Activated B cell treated with CpG ODN at 0.5 μM for 24 hours (primary cell): ENCODE measurements at regions of chr18 and their contacts with region 1.

Region 1: DNA sequence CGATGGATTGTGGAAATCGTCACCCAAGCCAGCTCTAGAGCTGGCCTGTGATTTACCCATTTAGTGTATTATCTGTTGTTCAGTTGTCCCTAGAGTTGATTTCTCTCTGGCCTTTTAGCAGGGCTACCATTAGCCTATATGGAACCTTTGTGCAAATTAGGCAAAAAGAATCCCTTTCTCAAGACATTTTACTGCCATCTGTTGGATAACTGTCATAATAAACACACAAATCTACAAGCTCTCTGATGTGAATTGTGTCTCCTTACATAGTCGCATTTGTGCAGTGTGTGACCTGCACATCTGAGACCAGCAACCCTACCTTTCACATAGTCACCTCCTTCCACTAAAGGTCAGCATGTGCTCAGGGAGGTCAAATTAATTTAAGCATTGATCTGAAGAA is 34.0 kb downstream of the LOXHD1 start:
- DNase-seq: no peak
- ATAC-seq: no peak
- H3K4me3 Mint-ChIP-seq: no peak overlapping the region
- H3K27ac Mint-ChIP-seq: no peak overlapping the region
- H3K4me1 Mint-ChIP-seq: peaks cover 2% of the 10 kb centered on the region
- H3K27me3 Mint-ChIP-seq: peaks cover 3% of the 10 kb centered on the region
- CTCF ChIP-seq: no peak

Region 2: DNA sequence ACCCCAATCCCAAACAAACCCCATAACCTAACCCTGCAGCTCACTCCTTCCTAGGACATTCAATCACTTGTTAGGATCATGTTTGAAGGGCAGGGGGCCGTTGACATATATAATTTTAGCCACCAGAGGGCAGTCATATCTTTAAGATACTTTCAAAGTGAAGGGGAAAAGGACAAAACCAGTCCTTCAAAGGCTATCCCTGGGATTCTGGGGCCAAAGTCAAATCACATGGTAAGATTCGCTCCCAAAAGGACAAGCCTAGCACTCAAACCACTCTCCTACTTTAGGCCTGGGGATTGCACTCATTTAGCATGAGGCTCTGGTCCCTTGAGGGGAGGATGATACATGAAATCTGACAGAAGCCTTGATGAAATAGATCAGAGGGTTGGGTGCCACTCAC is 474.2 kb before region 1 on chr18:
- CTCF ChIA-PET with region 1: no interaction called
- POLR2A ChIA-PET with region 1: no interaction called
- intact Hi-C with region 1: loop called (anchors 1 kb)
- DNase-seq: no peak
- ATAC-seq: no peak
- H3K4me3 Mint-ChIP-seq: no peak overlapping the region
- H3K27ac Mint-ChIP-seq: no peak overlapping the region
- H3K4me1 Mint-ChIP-seq: no peaks in the 10 kb centered on the region
- H3K27me3 Mint-ChIP-seq: no peaks in the 10 kb centered on the region
- CTCF ChIP-seq: peak; percentile 59